ENCODE measurements at regions of chr5 and their contacts with region 1.

Region 1: DNA sequence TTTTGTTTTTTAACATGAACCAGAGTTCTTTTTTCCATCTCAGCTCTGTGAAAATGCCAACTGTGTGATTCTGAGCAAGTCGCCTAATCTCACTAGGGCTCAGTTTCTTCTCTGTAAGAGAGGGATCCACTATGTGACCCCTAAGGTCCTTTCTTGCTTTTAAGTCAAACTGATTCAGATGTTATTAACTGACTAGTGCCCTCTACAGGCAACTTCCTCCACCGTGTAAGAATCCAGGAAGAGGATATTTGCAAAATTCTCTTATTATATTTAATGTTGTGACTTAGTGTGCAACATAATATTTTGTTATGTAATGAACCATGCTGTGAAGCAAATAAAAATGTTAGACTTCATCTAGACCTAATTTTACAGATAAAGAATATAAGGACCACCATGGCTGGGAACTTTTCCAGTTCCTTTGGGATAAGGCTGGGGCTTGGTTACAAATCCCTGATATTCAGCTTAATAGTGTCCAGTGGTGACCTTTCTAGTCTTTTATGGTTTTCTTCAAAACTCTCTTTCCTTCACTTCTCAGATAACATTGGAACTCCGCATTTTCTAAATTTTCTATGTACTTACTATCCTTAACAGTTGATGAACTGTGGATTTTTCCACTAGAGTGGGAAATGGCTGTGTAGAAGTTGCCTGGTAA is 244.7 kb downstream of the PIK3R1 start:
- DNase-seq: no peak
- ATAC-seq: peak; percentile 53

Region 2: DNA sequence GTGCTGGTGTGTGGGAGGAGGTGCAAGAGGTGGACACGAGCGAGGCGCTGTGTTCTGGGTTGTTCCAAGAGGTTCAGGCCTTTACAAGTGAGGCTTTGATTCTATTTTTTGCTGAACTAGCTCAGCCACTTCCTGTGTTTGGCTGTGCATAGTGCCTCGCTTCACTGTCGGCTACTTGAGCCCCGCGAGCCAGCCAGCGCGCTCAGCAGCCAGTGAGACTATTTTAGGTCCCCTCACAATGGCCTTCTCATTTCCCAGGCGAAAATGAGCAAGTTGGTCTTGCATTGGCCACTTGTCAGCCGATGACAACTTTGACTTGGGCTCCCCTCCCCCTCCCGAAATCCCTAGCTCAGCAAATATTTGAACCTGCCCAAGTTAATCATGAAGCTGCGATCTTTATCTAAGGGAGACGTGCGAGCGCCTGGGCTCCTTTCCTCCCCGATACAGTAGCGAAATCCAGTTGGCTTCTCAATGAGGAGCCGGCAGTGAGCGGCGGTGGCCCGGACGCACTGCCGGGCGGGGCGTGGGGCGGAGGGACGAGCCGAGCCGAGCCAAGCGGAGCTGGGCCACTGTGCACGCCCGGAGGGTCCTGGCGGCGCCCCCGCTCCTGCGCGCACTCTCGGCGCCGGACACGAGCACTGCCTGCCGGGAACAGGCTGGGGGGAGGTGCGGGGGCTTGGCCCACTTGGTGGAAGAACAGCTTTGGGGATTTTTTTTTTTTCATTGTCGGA is 172.1 kb before region 1 on chr5:
- intact Hi-C with region 1: loop called (anchors 5 kb)
- DNase-seq: peak; percentile 84
- ATAC-seq: peak; percentile 85

Region 3: GRCh38 chr5:68962757-68963484 is 502.6 kb after region 1 on chr5:
- intact Hi-C with region 1: loop called (anchors 10 kb)
- DNase-seq: peak; percentile 62
- ATAC-seq: peak; percentile 94

Measured in left ventricle myocardium superior (tissue), 1 donor.